Gastrocnemius medialis (tissue), 4 donors: ENCODE measurements at regions of chr22 and their contacts with region 1.

Region 1: DNA sequence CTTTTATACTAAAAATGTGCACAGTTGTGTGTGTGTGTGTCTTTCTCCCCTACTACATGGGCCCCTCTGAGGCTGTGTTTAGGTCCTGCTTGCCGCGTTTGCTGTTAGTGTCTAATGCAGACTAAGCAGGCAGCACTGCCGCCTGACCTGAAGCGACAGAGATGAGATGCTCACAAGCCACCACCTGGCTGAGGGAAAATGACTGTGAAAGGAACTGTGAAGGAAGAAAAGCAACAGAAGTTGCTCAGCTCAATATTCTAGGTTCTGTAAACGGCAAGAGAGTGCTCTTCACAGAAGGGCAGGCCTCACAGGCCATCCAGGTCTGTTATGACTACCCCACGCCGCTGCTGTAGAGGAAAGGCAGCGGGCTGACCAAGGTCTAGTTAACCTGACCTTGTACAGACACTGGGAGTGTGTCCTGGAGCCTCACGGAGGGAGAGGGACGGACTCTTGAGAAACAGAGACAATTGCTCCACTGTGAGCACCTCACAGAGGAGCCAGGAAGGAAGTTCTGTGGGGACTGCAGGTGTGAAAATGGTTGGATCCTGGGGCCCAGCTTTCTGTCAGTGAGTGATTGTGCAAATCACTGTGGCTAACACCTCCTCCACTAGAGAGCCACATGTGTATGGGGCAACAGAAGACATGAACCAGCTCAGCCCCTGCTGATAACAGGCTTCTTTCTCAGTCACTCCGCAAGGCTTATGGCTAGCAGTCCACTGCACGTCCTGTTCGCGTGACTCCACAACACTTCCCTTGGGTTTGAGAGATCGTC is 31.3 kb upstream of the YPEL1 start:
- DNase-seq: peak in 1 of 2 donors; percentile 21
- ATAC-seq: no peak
- H3K4me3 ChIP-seq: no peak overlapping the region
- H3K27ac ChIP-seq: no peak overlapping the region
- H3K4me1 ChIP-seq: no peaks in the 10 kb centered on the region
- H3K27me3 ChIP-seq: no peaks in the 10 kb centered on the region
- CTCF ChIP-seq: no peak
- POLR2A ChIP-seq: no peak

Region 2: DNA sequence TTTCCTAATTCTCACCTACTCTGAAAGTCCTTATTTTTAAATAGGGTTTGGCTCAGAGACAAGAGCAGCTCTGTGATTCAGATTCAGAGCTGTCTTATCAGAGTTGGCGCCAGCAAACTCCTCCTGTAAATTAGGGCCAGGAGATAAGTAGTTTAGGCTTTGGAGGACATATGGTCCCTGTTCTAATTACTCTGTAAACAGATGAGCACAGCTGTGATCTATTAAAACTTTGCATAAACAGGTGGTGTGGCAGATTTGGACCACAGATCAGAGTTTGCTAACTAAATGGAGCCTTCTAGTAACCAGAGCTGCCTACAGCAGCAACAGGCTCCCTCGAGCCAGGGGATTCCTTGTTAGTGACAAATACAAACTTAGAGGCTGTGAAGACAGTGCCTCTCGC is 59.2 kb before region 1 on chr22:
- in situ Hi-C with region 1: no loop called
- intact Hi-C with region 1: loop called (anchors 1 kb)
- DNase-seq: peak; percentile 67 to 76
- ATAC-seq: peak; percentile 90 to 96
- H3K4me3 ChIP-seq: no peak overlapping the region
- H3K27ac ChIP-seq: peak overlapping the region; percentile 72 to 84 (median 77)
- H3K4me1 ChIP-seq: peaks cover 19 to 23% of the 10 kb centered on the region in 2 donors
- H3K27me3 ChIP-seq: no peaks in the 10 kb centered on the region
- CTCF ChIP-seq: no peak
- POLR2A ChIP-seq: no peak